ENCODE measurements at regions of chr6 and their contacts with region 1.

Region 1: GRCh38 chr6:140105857-140106256 is 731.4 kb upstream of the CITED2 start:
- DNase-seq: no peak
- ATAC-seq: no peak
- H3K4me3 Mint-ChIP-seq: no peak overlapping the region
- H3K27ac Mint-ChIP-seq: no peak overlapping the region
- H3K4me1 Mint-ChIP-seq: no peaks in the 10 kb centered on the region
- H3K27me3 Mint-ChIP-seq: no peaks in the 10 kb centered on the region
- CTCF ChIP-seq: no peak

Region 2: DNA sequence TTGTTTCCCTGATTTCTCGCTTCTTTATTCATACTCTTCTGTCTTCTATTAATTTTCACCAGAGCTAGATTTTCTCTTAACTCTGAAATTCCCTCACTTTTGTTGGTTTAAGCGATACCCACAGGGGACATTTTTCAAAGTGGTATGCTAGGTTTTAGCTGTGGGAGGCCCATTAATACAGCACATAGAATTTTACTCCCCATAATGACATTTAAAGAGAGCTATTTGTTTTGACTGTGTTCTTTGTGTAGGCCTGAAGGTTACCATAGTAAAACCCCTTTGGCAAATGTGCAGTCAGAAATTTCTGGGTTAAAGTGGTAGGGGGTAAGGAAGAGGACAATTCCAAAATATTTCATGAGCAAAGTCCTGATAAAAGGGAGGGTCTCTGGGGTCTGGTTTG is 10.3 kb before region 1 on chr6:
- CTCF ChIA-PET with region 1: no interaction called
- POLR2A ChIA-PET with region 1: no interaction called
- intact Hi-C with region 1: no loop called
- DNase-seq: no peak
- ATAC-seq: no peak
- H3K4me3 Mint-ChIP-seq: no peak overlapping the region
- H3K27ac Mint-ChIP-seq: no peak overlapping the region
- H3K4me1 Mint-ChIP-seq: no peaks in the 10 kb centered on the region
- H3K27me3 Mint-ChIP-seq: no peaks in the 10 kb centered on the region
- CTCF ChIP-seq: no peak

Region 3: GRCh38 chr6:140311146-140311545 is 205.3 kb after region 1 on chr6:
- CTCF ChIA-PET with region 1: no interaction called
- POLR2A ChIA-PET with region 1: no interaction called
- intact Hi-C with region 1: no loop called
- DNase-seq: no peak
- ATAC-seq: no peak
- H3K4me3 Mint-ChIP-seq: no peak overlapping the region
- H3K27ac Mint-ChIP-seq: no peak overlapping the region
- H3K4me1 Mint-ChIP-seq: no peaks in the 10 kb centered on the region
- H3K27me3 Mint-ChIP-seq: no peaks in the 10 kb centered on the region
- CTCF ChIP-seq: no peak

Region 4: GRCh38 chr6:141244366-141244765 is 1138.5 kb after region 1 on chr6:
- CTCF ChIA-PET with region 1: no interaction called
- POLR2A ChIA-PET with region 1: no interaction called
- intact Hi-C with region 1: loop called (anchors 10 kb)
- DNase-seq: no peak
- ATAC-seq: no peak
- H3K4me3 Mint-ChIP-seq: no peak overlapping the region
- H3K27ac Mint-ChIP-seq: no peak overlapping the region
- H3K4me1 Mint-ChIP-seq: no peaks in the 10 kb centered on the region
- H3K27me3 Mint-ChIP-seq: no peaks in the 10 kb centered on the region
- CTCF ChIP-seq: no peak

Measured in activated B cell treated with CpG ODN at 0.5 μM for 24 hours (primary cell).